Lower leg skin (tissue), 4 donors: ENCODE measurements at regions of chr16 and their contacts with region 1.

Region 1: DNA sequence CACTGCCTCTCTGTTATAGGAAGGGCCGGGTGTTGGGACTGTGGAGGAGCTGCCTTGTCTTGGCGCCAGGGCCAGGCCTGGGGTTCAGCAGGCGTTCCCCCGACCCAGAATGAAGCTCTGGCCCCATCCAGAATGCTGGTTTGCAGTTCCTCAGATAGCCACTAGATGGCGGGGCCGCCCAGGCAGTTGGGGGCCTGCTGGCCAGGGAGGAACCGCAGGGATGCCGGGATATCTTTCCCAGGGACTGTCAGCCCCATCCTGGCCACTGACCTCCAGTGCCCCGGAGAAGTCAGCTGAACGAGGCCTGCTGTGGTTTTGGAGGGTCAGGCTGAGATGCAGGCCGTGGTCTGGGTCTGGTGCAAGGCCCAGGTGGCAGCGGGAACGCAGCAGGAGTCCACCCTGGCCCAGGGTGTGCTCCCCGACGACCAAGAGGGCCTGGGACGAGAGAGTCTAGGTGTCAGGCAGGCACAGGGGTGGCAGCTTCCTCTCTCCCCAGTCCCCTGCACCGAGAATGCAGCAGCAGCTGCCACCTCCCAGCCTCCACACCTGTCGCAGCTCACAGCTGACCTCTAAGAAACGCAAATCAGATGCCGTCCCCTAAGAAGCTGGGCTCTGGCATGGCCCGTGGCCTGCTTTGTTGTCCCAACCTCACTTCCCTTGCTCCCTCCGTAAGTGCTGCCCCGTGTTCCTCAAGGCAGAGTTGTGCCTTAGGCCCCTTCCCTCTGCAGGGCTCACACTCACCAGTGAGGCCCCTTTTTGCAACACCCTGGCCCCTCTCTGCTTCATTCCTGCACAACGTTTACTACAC is 51.2 kb downstream of the RMI2 start:
- DNase-seq: peak; percentile 51 to 94
- H3K4me3 ChIP-seq: no peak overlapping the region
- CTCF ChIP-seq: peak in 2 of 3 donors; percentile 38 to 93
- POLR2A ChIP-seq: no peak

Region 2: DNA sequence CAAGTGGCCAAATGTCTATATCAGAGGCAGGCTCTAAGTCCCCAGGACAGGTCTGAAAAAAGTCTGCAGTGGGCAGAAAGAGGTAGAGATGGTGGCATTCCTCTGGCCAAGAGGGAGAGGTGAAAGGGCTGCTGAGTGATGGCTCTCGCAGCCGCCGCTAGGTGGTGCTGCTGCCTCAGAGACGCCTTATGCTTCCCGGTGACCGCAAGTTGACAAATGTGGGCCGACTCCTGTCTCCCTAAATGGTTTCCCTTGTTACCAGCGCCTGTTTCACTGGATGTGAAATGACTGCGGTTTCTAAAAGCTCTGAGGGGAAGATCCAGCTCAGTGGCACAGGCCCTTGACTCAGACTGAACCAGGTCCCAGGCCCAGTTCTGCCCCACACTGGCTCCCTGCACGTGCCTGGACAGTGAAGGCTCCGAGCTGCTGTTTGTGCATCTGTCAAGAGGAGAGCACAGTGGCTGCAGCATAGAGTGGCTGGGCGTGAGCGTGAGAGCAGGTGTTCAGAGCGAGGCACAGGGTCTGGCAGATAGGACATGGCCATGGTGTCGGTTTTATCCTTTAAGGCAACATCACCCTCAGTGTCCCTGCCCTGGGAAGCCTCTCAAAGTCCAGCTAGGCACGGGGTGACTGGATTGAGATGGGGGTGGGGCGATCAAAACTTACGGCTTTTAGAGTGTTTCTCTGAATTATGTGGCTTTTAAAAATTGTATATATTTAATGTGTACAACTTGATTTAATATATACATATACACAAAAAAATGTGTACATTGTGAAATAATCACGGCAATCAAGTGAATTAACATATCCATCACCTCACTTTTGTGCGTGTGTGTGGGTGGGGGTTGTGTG is 432.2 kb before region 1 on chr16:
- intact Hi-C with region 1: loop called (anchors 10 kb)
- DNase-seq: peak; percentile 79 to 96
- H3K4me3 ChIP-seq: no peak overlapping the region
- CTCF ChIP-seq: peak in 1 of 3 donors; percentile 96
- POLR2A ChIP-seq: no peak

Region 3: DNA sequence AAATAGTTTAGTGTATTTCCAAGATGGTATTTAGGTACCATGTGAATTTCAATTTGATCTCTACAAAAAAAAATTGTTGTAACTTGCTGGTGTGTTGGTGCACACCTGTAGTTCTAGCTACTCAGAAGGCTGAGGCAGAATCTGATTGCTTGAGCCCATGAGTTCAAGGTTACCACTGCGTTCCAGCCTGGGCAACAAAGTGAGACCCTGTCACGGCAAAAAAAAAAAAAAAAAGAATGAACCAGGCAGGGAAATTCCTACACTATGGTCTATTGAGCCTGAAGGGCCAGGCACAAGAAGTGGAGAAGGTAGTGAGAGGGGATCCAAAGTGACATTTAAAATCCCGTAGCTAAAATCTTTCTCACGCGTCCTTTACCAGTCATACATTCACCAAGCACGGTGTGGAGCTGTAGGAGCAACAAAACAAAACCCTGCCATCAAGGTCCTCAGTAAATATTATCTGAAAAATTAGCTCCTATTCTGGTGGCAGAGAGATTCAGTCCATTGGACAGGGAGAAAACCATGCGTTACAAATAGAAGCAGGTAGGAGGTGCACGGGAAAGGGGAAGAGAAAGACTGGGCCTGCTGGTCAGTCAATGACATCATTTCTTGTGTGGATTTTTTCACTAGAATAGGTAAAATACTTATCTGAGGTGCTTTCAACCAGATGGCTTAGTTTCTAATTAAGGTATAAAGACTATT is 319.0 kb after region 1 on chr16:
- intact Hi-C with region 1: loop called (anchors 5 kb)
- DNase-seq: no peak
- H3K4me3 ChIP-seq: no peak overlapping the region
- CTCF ChIP-seq: no peak
- POLR2A ChIP-seq: no peak

Region 4: GRCh38 chr16:12067714-12068401 is 671.4 kb after region 1 on chr16:
- intact Hi-C with region 1: loop called (anchors 5 kb)
- DNase-seq: peak in 1 of 2 donors; percentile 54
- H3K4me3 ChIP-seq: no peak overlapping the region
- CTCF ChIP-seq: peak in 1 of 3 donors; percentile 86
- POLR2A ChIP-seq: no peak

Region 5: DNA sequence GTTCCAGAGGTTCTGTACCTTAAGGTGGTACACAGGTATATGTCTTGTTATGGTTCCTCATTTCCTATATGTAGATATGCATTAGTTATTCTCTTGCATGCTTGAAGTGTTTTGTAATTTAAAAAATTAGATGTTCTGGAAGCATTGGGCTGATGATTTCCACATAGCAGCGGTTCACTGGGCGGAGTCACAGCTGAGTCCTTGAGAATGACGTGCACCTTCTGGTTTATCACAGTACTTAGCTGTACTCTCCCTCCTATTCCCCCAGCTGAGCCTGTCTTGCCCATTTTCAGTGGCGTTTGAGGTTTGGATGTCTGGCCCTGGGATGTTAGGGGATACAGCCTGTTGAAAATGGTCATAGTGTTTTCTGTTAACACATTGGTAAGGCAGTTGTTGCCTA is 907.2 kb after region 1 on chr16:
- intact Hi-C with region 1: no loop called
- DNase-seq: peak in 1 of 2 donors; percentile 87
- H3K4me3 ChIP-seq: no peak overlapping the region
- CTCF ChIP-seq: no peak
- POLR2A ChIP-seq: no peak